H1 (cell line): ENCODE measurements at regions of chr5 and their contacts with region 1.

Region 1: GRCh38 chr5:151825445-151825844 is 53.7 kb downstream of the G3BP1 start:
- DNase-seq: peak; percentile 13 to 72
- H3K4me3 ChIP-seq: no peak overlapping the region
- H3K27ac ChIP-seq: no peak overlapping the region
- H3K4me1 ChIP-seq: peaks cover 0 to 4% (median 1%) of the 10 kb centered on the region in 4 experiments; a peak in 3 of 7 replicates
- H3K27me3 ChIP-seq: no peaks in the 10 kb centered on the region
- CTCF ChIP-seq: peak; percentile 52 to 91 (median 82)
- EP300 ChIP-seq: no peak
- POLR2A ChIP-seq: no peak
- RAD21 ChIP-seq: peak; percentile 99 to 100

Region 2: GRCh38 chr5:151811593-151812321 is 13.7 kb before region 1 on chr5:
- CTCF ChIA-PET with region 1: interaction called, 28 read pairs
- POLR2A ChIA-PET with region 1: interaction called, 4 read pairs
- DNase-seq: no peak
- H3K4me3 ChIP-seq: no peak overlapping the region
- H3K27ac ChIP-seq: no peak overlapping the region
- H3K4me1 ChIP-seq: peaks cover 0 to 3% (median 0%) of the 10 kb centered on the region in 4 experiments; a peak in 1 of 7 replicates
- H3K27me3 ChIP-seq: no peaks in the 10 kb centered on the region
- CTCF ChIP-seq: no peak
- EP300 ChIP-seq: no peak
- POLR2A ChIP-seq: no peak
- RAD21 ChIP-seq: no peak

Region 3: DNA sequence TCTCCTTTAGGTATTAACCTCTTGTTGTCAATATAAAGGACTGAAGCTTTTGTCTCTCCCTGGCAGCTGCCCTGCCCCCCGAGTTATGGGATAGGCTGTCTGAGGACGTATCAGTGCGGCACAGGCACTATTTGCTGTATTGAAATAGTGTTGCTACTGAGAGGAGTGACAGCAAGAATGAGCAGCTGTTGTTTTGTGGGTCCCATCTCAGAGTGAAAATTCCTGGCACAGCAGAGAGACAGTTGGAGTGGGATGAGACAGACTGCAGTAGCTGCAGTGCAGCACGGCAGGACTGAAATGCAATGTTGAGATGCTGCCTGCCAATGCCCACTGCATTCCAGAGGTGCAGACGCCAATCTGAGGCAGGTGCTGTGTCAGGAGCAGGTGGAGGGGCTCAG is 293.6 kb after region 1 on chr5:
- CTCF ChIA-PET with region 1: interaction called, 10 read pairs
- POLR2A ChIA-PET with region 1: no interaction called
- DNase-seq: no peak
- H3K4me3 ChIP-seq: no peak overlapping the region
- H3K27ac ChIP-seq: no peak overlapping the region
- H3K4me1 ChIP-seq: peaks cover 0 to 11% (median under 1%) of the 10 kb centered on the region in 4 experiments; a peak in 2 of 7 replicates
- H3K27me3 ChIP-seq: no peaks in the 10 kb centered on the region
- CTCF ChIP-seq: no peak
- EP300 ChIP-seq: no peak
- POLR2A ChIP-seq: no peak
- RAD21 ChIP-seq: no peak

Region 4: DNA sequence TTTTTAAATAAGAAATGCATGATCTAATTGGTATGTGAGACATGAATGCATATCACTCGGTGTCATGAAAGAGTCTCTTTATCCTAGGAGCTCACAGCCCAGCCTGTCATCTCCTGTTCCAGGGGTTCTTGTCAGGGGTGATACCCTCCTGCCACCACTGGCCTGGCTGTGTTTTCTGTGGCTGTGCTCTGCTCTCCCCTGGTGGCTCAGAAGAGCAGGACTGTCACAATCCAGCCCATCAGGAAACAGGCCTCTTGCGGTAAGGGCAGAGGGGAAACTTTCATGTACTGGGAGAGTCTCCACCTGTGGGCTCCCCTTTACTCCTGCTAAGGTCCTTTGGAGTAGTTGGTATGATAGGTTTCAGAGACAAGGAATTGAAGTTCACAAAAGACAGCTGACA is 339.4 kb after region 1 on chr5:
- CTCF ChIA-PET with region 1: interaction called, 16 read pairs
- POLR2A ChIA-PET with region 1: no interaction called
- DNase-seq: no peak
- H3K4me3 ChIP-seq: no peak overlapping the region
- H3K27ac ChIP-seq: no peak overlapping the region
- H3K4me1 ChIP-seq: peaks cover 0 to 2% (median under 1%) of the 10 kb centered on the region in 4 experiments; a peak in 1 of 7 replicates
- H3K27me3 ChIP-seq: peaks cover 0 to 1% (median 0%) of the 10 kb centered on the region in 4 experiments; a peak in 1 of 7 replicates
- CTCF ChIP-seq: peak; percentile 53 to 66 (median 64)
- EP300 ChIP-seq: no peak
- POLR2A ChIP-seq: no peak
- RAD21 ChIP-seq: peak; percentile 69 to 76

Region 5: DNA sequence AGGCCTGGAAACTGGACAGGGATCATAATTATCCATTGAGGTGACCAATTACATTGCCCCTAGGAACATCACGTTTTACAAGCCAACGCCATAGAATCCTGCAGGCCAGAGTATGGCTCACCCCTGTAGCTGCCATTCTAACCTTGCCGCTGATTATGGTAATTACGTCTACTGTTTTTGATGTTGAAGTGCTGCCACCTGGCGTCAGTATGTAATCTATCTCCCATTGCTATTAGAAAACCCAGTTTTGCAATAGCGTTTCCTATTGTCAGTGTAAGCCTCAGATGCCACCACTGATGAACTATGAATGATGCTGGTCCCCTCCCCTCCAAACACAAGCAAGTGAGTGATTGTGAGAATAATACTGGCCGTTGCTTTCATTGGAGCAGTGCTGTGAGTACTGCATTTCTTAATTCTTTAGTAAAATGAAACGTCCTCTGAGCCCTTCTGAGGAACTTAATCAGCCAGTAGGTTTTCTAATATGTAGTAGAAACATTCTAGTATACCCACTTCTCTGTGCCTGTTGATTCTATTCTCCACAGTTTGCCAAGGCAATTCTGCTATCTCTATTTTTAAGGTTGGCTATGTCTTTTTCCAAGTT is 680.1 kb after region 1 on chr5:
- CTCF ChIA-PET with region 1: interaction called, 12 read pairs
- POLR2A ChIA-PET with region 1: no interaction called
- DNase-seq: peak in 1 of 2 experiments; percentile 64
- H3K4me3 ChIP-seq: no peak overlapping the region
- H3K27ac ChIP-seq: no peak overlapping the region
- H3K4me1 ChIP-seq: no peaks in the 10 kb centered on the region
- H3K27me3 ChIP-seq: no peaks in the 10 kb centered on the region
- CTCF ChIP-seq: peak in 2 of 3 experiments; percentile 59 to 72; a peak in 2 of 4 replicates
- EP300 ChIP-seq: no peak
- POLR2A ChIP-seq: no peak
- RAD21 ChIP-seq: peak; percentile 81 to 84

Region 6: DNA sequence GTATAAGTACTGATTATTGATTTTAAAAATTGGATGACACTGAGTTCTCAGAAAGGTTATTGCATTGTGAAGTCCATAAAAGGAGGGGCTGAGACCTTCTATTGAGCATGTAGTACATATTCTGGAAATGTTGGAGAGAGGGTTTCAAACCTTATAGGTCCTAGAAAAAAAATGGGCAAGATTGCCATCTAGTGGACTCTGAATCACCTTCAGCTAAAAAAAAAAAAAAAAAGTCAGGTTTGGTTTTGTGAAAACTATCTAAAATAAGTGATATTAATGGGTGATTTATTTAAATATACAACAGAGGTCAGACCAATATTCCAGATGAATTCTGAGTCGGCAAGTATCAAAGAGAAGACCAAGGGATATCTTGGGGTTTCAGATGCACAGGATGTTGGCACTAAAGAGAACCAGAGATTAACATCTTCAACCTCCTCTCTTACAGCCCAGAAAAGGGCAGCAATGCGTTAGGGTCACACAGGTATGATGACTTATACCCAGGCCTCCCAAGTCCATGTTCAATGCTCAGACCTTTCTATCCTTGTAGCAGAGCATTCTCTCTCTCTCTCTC is 689.5 kb after region 1 on chr5:
- CTCF ChIA-PET with region 1: interaction called, 26 read pairs
- POLR2A ChIA-PET with region 1: no interaction called
- DNase-seq: no peak
- H3K4me3 ChIP-seq: no peak overlapping the region
- H3K27ac ChIP-seq: no peak overlapping the region
- H3K4me1 ChIP-seq: no peaks in the 10 kb centered on the region
- H3K27me3 ChIP-seq: no peaks in the 10 kb centered on the region
- CTCF ChIP-seq: peak in 2 of 3 experiments; percentile 19 to 32; a peak in 2 of 4 replicates
- EP300 ChIP-seq: no peak
- POLR2A ChIP-seq: no peak
- RAD21 ChIP-seq: peak; percentile 49 to 53